ENCODE measurements at regions of chr2 and their contacts with region 1.

Region 1: DNA sequence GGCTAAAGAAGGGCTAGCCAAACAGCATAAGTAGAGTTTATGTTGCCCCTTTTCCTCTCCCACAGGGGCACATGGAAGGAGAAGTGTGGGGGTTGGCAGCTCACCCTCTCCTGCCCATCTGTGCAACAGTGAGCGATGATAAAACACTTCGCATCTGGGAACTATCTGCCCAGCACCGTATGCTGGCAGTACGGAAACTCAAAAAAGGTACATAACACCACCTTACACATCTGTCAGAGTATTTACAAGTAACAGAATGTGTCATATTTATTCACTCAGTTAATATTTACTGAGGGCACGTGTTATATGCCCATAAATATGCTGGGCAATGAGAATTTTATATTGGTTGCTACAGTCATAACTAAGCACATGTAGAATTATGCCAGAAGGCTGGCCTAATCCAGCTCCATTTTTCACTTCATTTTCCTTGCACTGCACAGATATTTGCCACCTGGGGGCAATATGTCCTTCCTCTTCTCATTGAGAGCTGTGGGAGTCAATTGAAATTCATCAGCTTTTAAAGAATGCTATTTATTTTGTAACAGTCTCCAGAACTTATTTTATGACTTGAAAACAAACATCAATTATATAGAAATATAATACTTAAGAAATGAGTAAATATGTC is 150.6 kb downstream of the RTN4 start:
- DNase-seq: peak; percentile 4
- ATAC-seq: peak; percentile 68
- H3K4me3 ChIP-seq: no peak overlapping the region
- H3K27ac ChIP-seq: no peak overlapping the region
- H3K4me1 ChIP-seq: no peaks in the 10 kb centered on the region
- H3K27me3 ChIP-seq: no peaks in the 10 kb centered on the region
- CTCF ChIP-seq: peak; percentile 39 to 64 (median 55); a peak in 5 of 6 replicates
- EP300 ChIP-seq: no peak
- POLR2A ChIP-seq: no peak
- RAD21 ChIP-seq: peak; percentile 92

Region 2: DNA sequence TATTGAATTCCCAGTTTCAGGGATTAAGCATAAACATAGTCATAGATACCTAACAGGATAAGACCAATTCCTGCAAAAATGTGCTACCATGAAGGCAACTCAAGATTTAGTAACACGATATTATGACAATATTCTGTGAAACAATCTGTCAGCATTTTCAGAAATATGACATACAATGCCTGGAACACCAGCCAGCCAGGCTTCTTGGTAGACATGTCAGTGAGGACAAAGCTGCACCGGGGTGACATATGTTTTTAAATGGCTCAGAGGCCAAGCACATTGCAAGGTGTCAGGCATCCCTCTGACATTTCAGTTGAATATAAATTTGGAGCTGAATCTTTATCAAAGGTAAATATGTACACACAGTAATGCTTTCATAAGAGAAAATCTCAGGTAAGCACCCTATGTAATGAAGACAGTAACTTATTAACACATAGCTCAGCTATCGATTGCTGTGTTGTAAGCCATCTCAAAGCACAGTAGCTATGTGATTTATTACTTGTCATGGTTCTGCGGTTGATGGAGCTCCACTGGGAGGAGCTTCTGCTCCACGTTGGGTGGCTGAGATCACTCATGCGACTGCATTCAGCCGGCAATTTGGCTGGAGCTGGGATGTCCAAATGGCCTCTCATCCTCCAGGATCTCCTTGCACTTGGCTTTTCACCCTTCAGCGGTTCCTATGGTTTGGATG is 208.1 kb before region 1 on chr2:
- CTCF ChIA-PET with region 1: no interaction called
- POLR2A ChIA-PET with region 1: no interaction called
- RAD21 ChIA-PET with region 1: no interaction called
- SMC1A ChIA-PET with region 1: no interaction called
- in situ Hi-C with region 1: no loop called
- intact Hi-C with region 1: no loop called
- DNase-seq: no peak
- ATAC-seq: no peak
- H3K4me3 ChIP-seq: no peak overlapping the region
- H3K27ac ChIP-seq: no peak overlapping the region
- H3K4me1 ChIP-seq: no peaks in the 10 kb centered on the region; the same call in 1 of the 2 replicates
- H3K27me3 ChIP-seq: no peaks in the 10 kb centered on the region
- CTCF ChIP-seq: no peak
- EP300 ChIP-seq: no peak
- POLR2A ChIP-seq: no peak
- RAD21 ChIP-seq: no peak

Region 3: DNA sequence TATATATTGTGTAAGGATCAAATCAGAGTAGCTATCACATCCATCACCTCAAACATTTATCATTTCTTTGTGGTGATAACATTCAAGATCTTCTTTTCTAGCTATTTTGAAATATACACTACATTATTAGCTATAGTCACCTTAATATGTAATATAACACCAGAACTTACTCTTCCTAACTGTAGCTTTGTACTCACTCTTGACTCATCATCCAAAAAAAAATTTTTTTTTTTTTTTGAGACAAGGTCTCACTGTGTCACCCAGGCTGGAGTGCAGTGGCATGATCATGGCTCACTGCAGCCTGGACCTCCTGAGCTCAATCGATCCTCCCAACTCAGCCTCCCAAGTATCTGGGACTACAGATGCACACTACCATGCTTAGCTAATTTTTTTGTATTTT is 22.9 kb before region 1 on chr2:
- CTCF ChIA-PET with region 1: interaction called, 6 read pairs
- POLR2A ChIA-PET with region 1: no interaction called
- RAD21 ChIA-PET with region 1: no interaction called
- SMC1A ChIA-PET with region 1: interaction called, 11 read pairs
- in situ Hi-C with region 1: no loop called
- intact Hi-C with region 1: no loop called
- DNase-seq: no peak
- ATAC-seq: no peak
- H3K4me3 ChIP-seq: no peak overlapping the region
- H3K27ac ChIP-seq: no peak overlapping the region
- H3K4me1 ChIP-seq: no peaks in the 10 kb centered on the region
- H3K27me3 ChIP-seq: no peaks in the 10 kb centered on the region
- CTCF ChIP-seq: no peak
- EP300 ChIP-seq: no peak
- POLR2A ChIP-seq: no peak
- RAD21 ChIP-seq: no peak

Region 4: GRCh38 chr2:54969940-54970338 is 70.3 kb after region 1 on chr2:
- CTCF ChIA-PET with region 1: interaction called, 11 read pairs
- POLR2A ChIA-PET with region 1: no interaction called
- RAD21 ChIA-PET with region 1: interaction called, 6 read pairs
- SMC1A ChIA-PET with region 1: interaction called, 5 read pairs
- in situ Hi-C with region 1: no loop called
- intact Hi-C with region 1: no loop called
- DNase-seq: no peak
- ATAC-seq: no peak
- H3K4me3 ChIP-seq: no peak overlapping the region
- H3K27ac ChIP-seq: no peak overlapping the region
- H3K4me1 ChIP-seq: no peaks in the 10 kb centered on the region; the same call in 1 of the 2 replicates
- H3K27me3 ChIP-seq: no peaks in the 10 kb centered on the region
- CTCF ChIP-seq: no peak
- EP300 ChIP-seq: no peak
- POLR2A ChIP-seq: no peak
- RAD21 ChIP-seq: no peak

Region 5: GRCh38 chr2:55026202-55026601 is 126.5 kb after region 1 on chr2:
- CTCF ChIA-PET with region 1: interaction called, 10 read pairs
- POLR2A ChIA-PET with region 1: no interaction called
- RAD21 ChIA-PET with region 1: interaction called, 3 read pairs
- SMC1A ChIA-PET with region 1: interaction called, 3 read pairs
- in situ Hi-C with region 1: no loop called
- intact Hi-C with region 1: no loop called
- DNase-seq: no peak
- ATAC-seq: no peak; the same call in 2 of the 3 replicates
- H3K4me3 ChIP-seq: peak overlapping the region; percentile 40; the same call in 1 of the 2 replicates
- H3K27ac ChIP-seq: peak overlapping the region; percentile 69
- H3K4me1 ChIP-seq: peaks cover 26% of the 10 kb centered on the region
- H3K27me3 ChIP-seq: no peaks in the 10 kb centered on the region
- CTCF ChIP-seq: no peak
- EP300 ChIP-seq: no peak
- POLR2A ChIP-seq: no peak
- RAD21 ChIP-seq: no peak

Region 6: GRCh38 chr2:55159037-55159651 is 259.5 kb after region 1 on chr2:
- CTCF ChIA-PET with region 1: interaction called, 4 read pairs
- POLR2A ChIA-PET with region 1: no interaction called
- RAD21 ChIA-PET with region 1: interaction called, 7 read pairs
- SMC1A ChIA-PET with region 1: interaction called, 14 read pairs
- in situ Hi-C with region 1: no loop called
- intact Hi-C with region 1: no loop called
- DNase-seq: no peak
- ATAC-seq: peak; percentile 71
- H3K4me3 ChIP-seq: no peak overlapping the region
- H3K27ac ChIP-seq: peak overlapping the region; percentile 29; the same call in 1 of the 2 replicates
- H3K4me1 ChIP-seq: peaks cover 10% of the 10 kb centered on the region
- H3K27me3 ChIP-seq: no peaks in the 10 kb centered on the region
- CTCF ChIP-seq: no peak
- EP300 ChIP-seq: no peak
- POLR2A ChIP-seq: no peak
- RAD21 ChIP-seq: no peak

Region 7: DNA sequence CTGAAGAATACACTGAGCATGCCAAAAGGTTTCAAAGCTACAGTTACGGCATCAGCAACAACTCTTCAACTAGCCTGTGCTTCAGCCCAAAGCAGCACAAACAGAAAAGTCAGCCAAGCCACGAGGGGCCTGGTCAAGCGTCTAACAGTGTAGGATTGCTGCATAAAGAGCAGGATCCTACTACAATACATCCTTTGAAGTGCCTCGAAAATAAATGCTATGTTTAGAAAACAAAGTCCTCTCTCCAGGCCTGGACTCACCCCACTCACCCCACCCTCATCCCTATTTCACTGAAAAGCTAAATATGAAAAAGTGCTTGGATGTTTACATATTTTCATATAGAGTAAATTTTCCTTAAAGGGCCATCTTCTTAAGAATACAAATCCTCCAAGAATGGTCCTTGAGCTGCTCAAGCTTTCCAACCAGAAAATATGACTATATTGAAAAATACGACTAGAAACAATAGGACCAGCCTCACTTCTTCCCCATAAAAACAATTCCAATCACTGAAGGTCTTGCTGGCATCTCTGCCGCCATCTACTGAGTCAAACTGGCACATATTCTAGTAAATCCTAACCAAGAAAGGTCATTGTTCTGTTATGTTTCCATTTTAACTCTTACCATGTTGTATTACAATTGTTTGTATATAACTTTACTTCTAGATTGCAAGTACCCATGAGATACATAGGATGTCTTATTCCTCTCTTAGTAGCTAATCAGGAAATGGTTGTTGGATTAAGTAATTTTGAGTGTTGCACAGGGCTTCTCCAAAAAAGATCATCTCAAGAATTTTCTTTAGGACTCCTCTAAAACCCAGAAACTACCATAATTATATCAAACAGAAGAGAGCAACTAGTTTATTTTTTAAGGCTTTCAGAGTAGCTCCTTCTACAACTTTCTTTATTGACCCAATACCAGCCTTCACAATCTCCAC is 268.8 kb after region 1 on chr2:
- CTCF ChIA-PET with region 1: interaction called, 256 read pairs
- POLR2A ChIA-PET with region 1: interaction called, 3 read pairs
- RAD21 ChIA-PET with region 1: interaction called, 194 read pairs
- SMC1A ChIA-PET with region 1: interaction called, 102 read pairs
- in situ Hi-C with region 1: loop called (anchors 5 kb)
- intact Hi-C with region 1: loop called (anchors 1 kb)
- DNase-seq: no peak
- ATAC-seq: peak; percentile 83
- H3K4me3 ChIP-seq: no peak overlapping the region
- H3K27ac ChIP-seq: no peak overlapping the region
- H3K4me1 ChIP-seq: no peaks in the 10 kb centered on the region
- H3K27me3 ChIP-seq: no peaks in the 10 kb centered on the region
- CTCF ChIP-seq: peak; percentile 73 to 74 (median 73)
- EP300 ChIP-seq: no peak
- POLR2A ChIP-seq: no peak
- RAD21 ChIP-seq: peak; percentile 89

Region 8: GRCh38 chr2:55175254-55176025 is 275.8 kb after region 1 on chr2:
- CTCF ChIA-PET with region 1: interaction called, 256 read pairs
- POLR2A ChIA-PET with region 1: no interaction called
- RAD21 ChIA-PET with region 1: interaction called, 194 read pairs
- SMC1A ChIA-PET with region 1: interaction called, 102 read pairs
- in situ Hi-C with region 1: no loop called
- intact Hi-C with region 1: loop called (anchors 1 kb)
- DNase-seq: no peak
- ATAC-seq: peak; percentile 86
- H3K4me3 ChIP-seq: no peak overlapping the region
- H3K27ac ChIP-seq: no peak overlapping the region
- H3K4me1 ChIP-seq: no peaks in the 10 kb centered on the region
- H3K27me3 ChIP-seq: no peaks in the 10 kb centered on the region
- CTCF ChIP-seq: peak; percentile 39 to 68 (median 56); a peak in 4 of 6 replicates
- EP300 ChIP-seq: no peak
- POLR2A ChIP-seq: no peak
- RAD21 ChIP-seq: peak; percentile 82